Activated naive CD4-positive, alpha-beta T cell treated with anti-CD3 and anti-CD28 coated beads for 36 hours (primary cell): ENCODE measurements at regions of chr15 and their contacts with region 1.

Region 1: DNA sequence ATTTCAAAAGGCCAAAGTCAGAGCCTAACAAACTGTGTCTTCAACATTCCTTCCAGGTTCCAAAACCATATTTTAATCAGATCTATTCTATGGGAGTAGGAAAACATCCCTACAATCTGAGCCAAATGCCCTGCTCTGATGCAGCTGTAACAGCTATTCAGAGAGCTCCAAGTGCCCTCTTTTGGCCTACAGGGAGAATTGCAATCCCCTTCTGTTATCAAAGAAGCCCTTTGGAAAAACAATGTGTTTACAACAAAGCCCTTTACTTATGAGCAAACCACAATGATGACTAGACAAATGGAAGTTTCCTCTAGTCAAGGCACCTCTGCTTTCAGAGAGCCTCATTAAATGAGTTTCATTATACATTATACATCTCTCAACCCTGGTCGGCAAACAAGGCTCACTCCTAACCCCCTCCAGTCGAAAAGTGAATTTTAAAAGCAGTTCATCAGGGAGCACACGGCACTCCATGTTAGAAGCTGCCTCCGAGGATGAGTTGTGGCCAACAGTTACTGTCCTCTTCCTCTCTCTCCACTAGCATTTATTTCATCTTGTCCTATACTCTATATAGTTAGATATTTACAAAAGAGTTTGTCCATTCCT is 42.6 kb upstream of the TMCO5A start:
- DNase-seq: peak; percentile 5
- H3K4me3 Mint-ChIP-seq: no peak overlapping the region
- H3K27ac Mint-ChIP-seq: no peak overlapping the region
- H3K4me1 Mint-ChIP-seq: no peaks in the 10 kb centered on the region
- H3K27me3 Mint-ChIP-seq: peaks cover 16% of the 10 kb centered on the region

Region 2: GRCh38 chr15:37682304-37682703 is 209.6 kb before region 1 on chr15:
- CTCF ChIA-PET with region 1: no interaction called
- intact Hi-C with region 1: loop called (anchors 10 kb)
- DNase-seq: no peak
- H3K4me3 Mint-ChIP-seq: no peak overlapping the region
- H3K27ac Mint-ChIP-seq: no peak overlapping the region
- H3K4me1 Mint-ChIP-seq: no peaks in the 10 kb centered on the region
- H3K27me3 Mint-ChIP-seq: no peaks in the 10 kb centered on the region

Region 3: DNA sequence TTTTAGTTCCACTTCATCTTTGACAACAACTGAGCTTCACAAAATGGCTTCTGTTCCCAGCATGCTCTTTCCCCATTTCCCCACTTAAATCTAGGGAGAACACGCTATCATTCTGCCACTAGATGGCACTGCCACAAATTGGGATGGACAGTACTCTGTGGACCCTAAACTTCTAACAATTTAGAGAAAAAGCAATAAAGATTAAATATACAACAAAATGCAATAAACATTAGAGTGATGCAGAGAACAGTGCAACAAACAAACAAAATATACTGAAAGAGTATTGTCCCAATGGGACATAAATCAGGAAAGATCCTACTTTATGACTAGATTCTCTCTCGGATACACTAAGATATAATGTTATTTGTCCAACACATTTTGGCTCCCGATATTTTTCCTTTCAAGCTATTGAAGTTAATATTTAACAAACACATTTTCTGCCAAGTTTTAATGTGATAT is 127.1 kb before region 1 on chr15:
- CTCF ChIA-PET with region 1: no interaction called
- intact Hi-C with region 1: loop called (anchors 5 kb)
- DNase-seq: peak; percentile 53
- H3K4me3 Mint-ChIP-seq: no peak overlapping the region
- H3K27ac Mint-ChIP-seq: no peak overlapping the region
- H3K4me1 Mint-ChIP-seq: peaks cover 4% of the 10 kb centered on the region
- H3K27me3 Mint-ChIP-seq: peaks cover 2% of the 10 kb centered on the region